WTC11 (cell line): ENCODE measurements at regions of chr3 and their contacts with region 1.

Region 1: GRCh38 chr3:141192345-141192744 is 39.3 kb upstream of the PXYLP1 start:
- DNase-seq: peak; percentile 100
- ATAC-seq: peak; percentile 98
- H3K4me3 Mint-ChIP-seq: no peak overlapping the region
- H3K27ac Mint-ChIP-seq: no peak overlapping the region
- H3K4me1 Mint-ChIP-seq: no peaks in the 10 kb centered on the region
- H3K27me3 Mint-ChIP-seq: peaks cover 16% of the 10 kb centered on the region
- CTCF ChIP-seq: peak; percentile 98

Region 2: GRCh38 chr3:141000027-141000663 is 192.2 kb before region 1 on chr3:
- CTCF ChIA-PET with region 1: interaction called, 18 read pairs
- POLR2A ChIA-PET with region 1: no interaction called
- DNase-seq: peak; percentile 77
- ATAC-seq: peak; percentile 99
- H3K4me3 Mint-ChIP-seq: no peak overlapping the region
- H3K27ac Mint-ChIP-seq: no peak overlapping the region
- H3K4me1 Mint-ChIP-seq: no peaks in the 10 kb centered on the region
- H3K27me3 Mint-ChIP-seq: no peaks in the 10 kb centered on the region
- CTCF ChIP-seq: peak; percentile 26; the same call in 1 of the 2 replicates

Region 3: DNA sequence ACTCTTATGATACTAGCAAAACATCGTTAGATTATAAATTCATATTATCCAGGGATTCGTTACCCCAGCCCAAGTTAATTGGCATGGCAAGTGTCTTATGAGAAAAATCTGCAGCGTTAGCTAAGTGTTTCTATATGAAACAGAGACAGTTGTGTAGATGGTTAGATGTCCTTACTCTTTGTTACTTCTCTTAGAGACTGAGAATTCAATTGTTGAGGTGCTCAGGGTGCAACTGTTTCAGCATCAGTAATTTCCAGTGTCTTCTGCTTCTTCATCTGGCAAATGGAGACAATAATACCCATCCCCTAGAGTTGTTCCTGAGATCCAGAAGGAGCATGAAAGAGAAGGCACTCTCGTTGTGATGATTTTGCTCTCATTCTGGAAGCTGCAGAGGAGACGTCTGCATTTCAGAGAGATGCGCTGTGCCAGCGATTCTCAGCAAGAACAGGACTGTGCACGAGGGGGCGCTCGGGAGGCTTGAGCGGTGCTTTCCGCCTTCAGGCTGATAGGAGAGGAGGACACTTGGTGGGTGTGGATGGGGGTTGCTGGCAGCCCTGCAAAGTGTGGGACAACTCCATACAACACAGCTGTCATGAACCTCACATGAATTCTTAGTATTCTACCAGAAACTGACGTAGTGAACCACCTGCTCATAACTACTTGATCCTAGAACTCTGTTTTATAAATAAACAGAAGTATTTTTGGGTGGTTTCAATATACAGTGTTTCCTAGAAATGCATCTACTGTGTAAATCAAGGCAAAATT is 180.9 kb before region 1 on chr3:
- CTCF ChIA-PET with region 1: interaction called, 32 read pairs
- POLR2A ChIA-PET with region 1: no interaction called
- DNase-seq: peak; percentile 95
- ATAC-seq: peak; percentile 96
- H3K4me3 Mint-ChIP-seq: no peak overlapping the region
- H3K27ac Mint-ChIP-seq: no peak overlapping the region
- H3K4me1 Mint-ChIP-seq: peaks cover 24% of the 10 kb centered on the region
- H3K27me3 Mint-ChIP-seq: no peaks in the 10 kb centered on the region; the same call in 1 of the 2 replicates
- CTCF ChIP-seq: peak; percentile 81